H1 (cell line): ENCODE measurements at regions of chr2 and their contacts with region 1.

Region 1: GRCh38 chr2:27754138-27754588 is 17.4 kb upstream of the MRPL33 start:
- DNase-seq: peak; percentile 72 to 92
- H3K4me3 ChIP-seq: peak overlapping the region in 1 of 4 experiments; percentile 64; a peak in 1 of 8 replicates
- H3K27ac ChIP-seq: no peak overlapping the region
- H3K4me1 ChIP-seq: peaks cover 3 to 13% (median 8%) of the 10 kb centered on the region in 4 experiments; a peak in 6 of 7 replicates
- H3K27me3 ChIP-seq: no peaks in the 10 kb centered on the region
- CTCF ChIP-seq: peak; percentile 96 to 99 (median 99)
- EP300 ChIP-seq: no peak
- POLR2A ChIP-seq: no peak
- RAD21 ChIP-seq: peak; percentile 96 to 98

Region 2: DNA sequence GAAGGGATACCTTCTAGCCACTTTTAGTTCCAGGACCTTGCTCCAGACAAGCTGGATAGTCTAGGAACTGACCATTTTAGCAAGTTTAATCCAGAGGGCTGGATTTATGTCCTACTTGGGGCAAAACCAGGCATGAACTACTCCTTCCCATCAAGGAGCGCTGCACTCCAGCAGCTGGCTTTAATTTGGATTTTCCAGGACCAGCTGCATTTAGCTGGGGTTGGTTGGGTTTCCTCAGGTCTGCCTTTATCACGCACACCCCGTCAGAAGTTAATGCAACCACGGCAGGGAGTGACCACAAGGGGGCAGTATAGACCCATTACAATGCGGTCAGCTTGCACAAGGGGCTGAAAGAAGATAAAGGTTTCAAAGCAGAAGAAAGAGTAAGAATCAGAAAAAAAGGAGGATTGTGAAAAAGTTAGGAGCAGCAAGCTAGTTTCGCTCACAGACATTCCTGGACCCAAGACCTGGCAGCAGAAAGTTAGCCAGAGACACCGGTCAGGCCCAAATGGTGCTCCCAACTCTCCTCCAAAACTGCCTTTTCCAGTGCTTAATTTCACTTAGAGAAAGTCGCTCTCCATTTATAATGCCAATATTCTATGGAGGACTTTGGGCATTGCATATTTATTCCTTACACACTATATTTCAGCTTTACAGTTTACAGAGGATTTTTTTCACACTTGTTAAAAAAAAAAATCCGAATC is 50.4 kb before region 1 on chr2:
- CTCF ChIA-PET with region 1: interaction called, 20 read pairs
- POLR2A ChIA-PET with region 1: interaction called, 4 read pairs
- DNase-seq: peak; percentile 77 to 94
- H3K4me3 ChIP-seq: no peak overlapping the region
- H3K27ac ChIP-seq: no peak overlapping the region
- H3K4me1 ChIP-seq: peaks cover 0 to 4% (median under 1%) of the 10 kb centered on the region in 4 experiments; a peak in 3 of 7 replicates
- H3K27me3 ChIP-seq: no peaks in the 10 kb centered on the region; a peak in 1 of 7 replicates
- CTCF ChIP-seq: peak; percentile 88 to 96 (median 89)
- EP300 ChIP-seq: no peak
- POLR2A ChIP-seq: no peak
- RAD21 ChIP-seq: peak; percentile 91 to 93

Region 3: GRCh38 chr2:27723372-27724144 is 30.6 kb before region 1 on chr2:
- CTCF ChIA-PET with region 1: interaction called, 36 read pairs
- POLR2A ChIA-PET with region 1: interaction called, 24 read pairs
- DNase-seq: peak in 1 of 2 experiments; percentile 81
- H3K4me3 ChIP-seq: no peak overlapping the region
- H3K27ac ChIP-seq: no peak overlapping the region
- H3K4me1 ChIP-seq: peaks cover 8 to 21% (median 10%) of the 10 kb centered on the region in 4 experiments
- H3K27me3 ChIP-seq: no peaks in the 10 kb centered on the region
- CTCF ChIP-seq: peak; percentile 51 to 84 (median 54)
- EP300 ChIP-seq: no peak
- POLR2A ChIP-seq: no peak
- RAD21 ChIP-seq: peak; percentile 62 to 64

Region 4: DNA sequence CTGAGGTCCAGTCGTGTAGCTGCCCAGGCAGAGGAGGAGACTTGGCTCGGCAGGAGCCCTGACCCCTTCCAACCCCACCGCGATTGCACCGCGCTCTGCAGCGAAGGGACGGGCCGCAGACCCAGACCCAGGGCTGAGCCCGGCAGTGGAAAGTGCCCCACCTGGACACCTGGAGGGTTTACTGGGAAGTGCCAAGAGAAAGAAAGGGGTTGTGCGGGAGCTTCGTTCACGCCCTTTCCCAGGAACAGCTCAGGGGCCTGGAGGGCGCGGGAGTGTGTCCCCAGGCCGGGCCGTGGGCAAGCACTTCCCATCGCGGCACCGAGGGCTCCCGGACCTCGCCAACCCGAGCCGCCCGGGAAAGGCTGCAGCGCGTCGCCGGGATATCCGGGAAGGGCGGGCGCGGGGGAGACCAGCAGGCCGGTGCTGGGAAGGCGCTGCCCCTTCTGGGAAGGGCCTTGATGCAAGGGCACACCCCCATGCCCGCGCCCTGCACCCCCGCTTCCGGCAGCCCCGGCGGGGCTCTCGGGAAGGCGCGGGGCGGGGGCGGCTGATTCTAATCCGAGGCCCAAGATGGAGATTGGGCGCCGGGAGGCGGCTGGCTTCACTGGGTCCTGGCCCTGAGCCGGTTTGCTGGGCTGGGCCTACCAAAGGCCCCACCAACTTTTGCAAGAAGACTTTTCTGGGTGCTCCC is 18.8 kb before region 1 on chr2:
- CTCF ChIA-PET with region 1: interaction called, 8 read pairs
- POLR2A ChIA-PET with region 1: interaction called, 63 read pairs
- DNase-seq: peak; percentile 47 to 86
- H3K4me3 ChIP-seq: peak overlapping the region; percentile 55 to 65 (median 56)
- H3K27ac ChIP-seq: peak overlapping the region; percentile 54; the same call in 1 of the 2 replicates
- H3K4me1 ChIP-seq: peaks cover 5 to 12% (median 7%) of the 10 kb centered on the region in 4 experiments
- H3K27me3 ChIP-seq: no peaks in the 10 kb centered on the region; a peak in 1 of 7 replicates
- CTCF ChIP-seq: no peak
- EP300 ChIP-seq: no peak
- POLR2A ChIP-seq: peak; percentile 62 to 79
- RAD21 ChIP-seq: peak in 1 of 2 experiments; percentile 14; a peak in 1 of 4 replicates

Region 5: GRCh38 chr2:27823569-27823968 is 69.4 kb after region 1 on chr2:
- CTCF ChIA-PET with region 1: no interaction called
- POLR2A ChIA-PET with region 1: no interaction called
- DNase-seq: no peak
- H3K4me3 ChIP-seq: no peak overlapping the region
- H3K27ac ChIP-seq: no peak overlapping the region
- H3K4me1 ChIP-seq: no peaks in the 10 kb centered on the region; a peak in 1 of 7 replicates
- H3K27me3 ChIP-seq: no peaks in the 10 kb centered on the region
- CTCF ChIP-seq: no peak
- EP300 ChIP-seq: no peak
- POLR2A ChIP-seq: no peak
- RAD21 ChIP-seq: peak in 1 of 2 experiments; percentile 10; a peak in 1 of 4 replicates

Region 6: GRCh38 chr2:28392297-28393113 is 638.3 kb after region 1 on chr2 and contains the start of gene FOSL2:
- CTCF ChIA-PET with region 1: no interaction called
- POLR2A ChIA-PET with region 1: interaction called, 17 read pairs
- DNase-seq: peak; percentile 81 to 86
- H3K4me3 ChIP-seq: peak within 1 kb of the TSS; percentile 51 to 94 (median 69)
- H3K27ac ChIP-seq: no peak within 1 kb of the TSS
- H3K4me1 ChIP-seq: peaks cover 9 to 19% (median 12%) of the 10 kb centered on the region in 4 experiments
- H3K27me3 ChIP-seq: peaks cover 19 to 57% (median 45%) of the 10 kb centered on the region in 4 experiments
- CTCF ChIP-seq: no peak
- EP300 ChIP-seq: 0 out of 3 replicates have a peak, but pooled peaks of 1 of the 2 experiments have one; percentile 20
- POLR2A ChIP-seq: peak in 1 of 2 experiments; percentile 21; a peak in 1 of 3 replicates
- RAD21 ChIP-seq: peak in 1 of 2 experiments; percentile 7; a peak in 1 of 4 replicates
- total RNA-seq, gene FOSL2: 4.5 and 5.5 TPM in 2 replicates